WTC11 (cell line): ENCODE measurements at regions of chr17 and their contacts with region 1.

Region 1: GRCh38 chr17:78082988-78083387 is 45.6 kb downstream of the TMC6 start:
- DNase-seq: no peak
- ATAC-seq: no peak
- H3K4me3 Mint-ChIP-seq: no peak overlapping the region
- H3K27ac Mint-ChIP-seq: no peak overlapping the region
- H3K4me1 Mint-ChIP-seq: no peaks in the 10 kb centered on the region
- H3K27me3 Mint-ChIP-seq: no peaks in the 10 kb centered on the region
- CTCF ChIP-seq: no peak

Region 2: GRCh38 chr17:78007655-78008054 is 75.3 kb before region 1 on chr17:
- CTCF ChIA-PET with region 1: no interaction called
- POLR2A ChIA-PET with region 1: no interaction called
- DNase-seq: no peak
- ATAC-seq: no peak
- H3K4me3 Mint-ChIP-seq: no peak overlapping the region
- H3K27ac Mint-ChIP-seq: no peak overlapping the region
- H3K4me1 Mint-ChIP-seq: peaks cover 20% of the 10 kb centered on the region
- H3K27me3 Mint-ChIP-seq: no peaks in the 10 kb centered on the region
- CTCF ChIP-seq: no peak

Region 3: DNA sequence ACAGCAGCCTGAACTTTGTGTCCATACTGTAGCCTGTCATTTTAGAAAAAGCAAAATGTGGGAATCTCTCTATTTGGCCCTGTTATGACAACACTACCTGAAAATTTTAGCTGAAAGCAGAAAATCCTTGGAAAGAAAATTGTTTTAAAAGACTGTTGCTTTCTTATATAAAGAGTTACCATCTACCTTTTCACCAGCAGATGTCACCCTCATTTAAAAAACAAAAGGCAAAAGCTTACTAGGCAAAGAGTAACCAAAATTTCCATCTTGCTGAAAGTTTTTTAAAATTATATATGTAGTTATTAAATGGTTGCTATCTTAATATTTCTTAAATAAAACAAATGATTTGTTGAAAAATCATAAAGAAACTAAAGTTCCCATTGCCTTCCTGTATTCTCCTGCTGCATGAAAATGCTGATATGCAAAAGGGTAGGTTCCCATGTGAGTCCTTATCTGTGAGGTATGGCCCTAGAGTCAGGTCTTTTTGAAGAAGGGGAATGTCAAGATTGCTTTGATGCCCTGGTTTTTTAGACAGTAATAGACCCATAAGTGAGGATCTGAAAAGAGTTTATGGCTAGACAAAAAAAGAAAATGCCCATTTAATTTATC is 63.5 kb before region 1 on chr17:
- CTCF ChIA-PET with region 1: interaction called, 19 read pairs
- POLR2A ChIA-PET with region 1: no interaction called
- DNase-seq: no peak
- ATAC-seq: no peak
- H3K4me3 Mint-ChIP-seq: no peak overlapping the region
- H3K27ac Mint-ChIP-seq: peak overlapping the region; percentile 15
- H3K4me1 Mint-ChIP-seq: peaks cover 16% of the 10 kb centered on the region
- H3K27me3 Mint-ChIP-seq: no peaks in the 10 kb centered on the region
- CTCF ChIP-seq: no peak

Region 4: DNA sequence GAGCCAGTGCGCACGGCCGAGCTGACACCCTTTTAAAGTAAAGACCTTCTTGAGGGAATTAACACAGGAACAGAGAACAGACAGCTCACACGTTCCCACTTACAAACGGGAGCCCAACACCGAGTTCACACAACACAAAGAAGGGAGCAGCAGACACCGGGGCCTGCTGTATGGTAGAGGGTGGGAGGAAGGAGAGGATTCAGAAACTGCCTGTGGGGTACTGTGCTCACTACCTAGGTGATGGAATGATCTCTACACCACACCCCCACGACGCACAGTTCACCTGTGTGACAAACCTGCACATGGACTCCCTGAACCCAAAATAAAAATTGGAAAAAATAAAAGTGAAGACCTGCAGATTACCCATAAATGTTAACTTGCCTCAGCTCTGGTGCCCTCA is 13.1 kb after region 1 on chr17:
- CTCF ChIA-PET with region 1: interaction called, 10 read pairs
- POLR2A ChIA-PET with region 1: no interaction called
- DNase-seq: no peak
- ATAC-seq: no peak
- H3K4me3 Mint-ChIP-seq: no peak overlapping the region
- H3K27ac Mint-ChIP-seq: no peak overlapping the region
- H3K4me1 Mint-ChIP-seq: no peaks in the 10 kb centered on the region
- H3K27me3 Mint-ChIP-seq: no peaks in the 10 kb centered on the region; the same call in 1 of the 2 replicates
- CTCF ChIP-seq: no peak

Region 5: DNA sequence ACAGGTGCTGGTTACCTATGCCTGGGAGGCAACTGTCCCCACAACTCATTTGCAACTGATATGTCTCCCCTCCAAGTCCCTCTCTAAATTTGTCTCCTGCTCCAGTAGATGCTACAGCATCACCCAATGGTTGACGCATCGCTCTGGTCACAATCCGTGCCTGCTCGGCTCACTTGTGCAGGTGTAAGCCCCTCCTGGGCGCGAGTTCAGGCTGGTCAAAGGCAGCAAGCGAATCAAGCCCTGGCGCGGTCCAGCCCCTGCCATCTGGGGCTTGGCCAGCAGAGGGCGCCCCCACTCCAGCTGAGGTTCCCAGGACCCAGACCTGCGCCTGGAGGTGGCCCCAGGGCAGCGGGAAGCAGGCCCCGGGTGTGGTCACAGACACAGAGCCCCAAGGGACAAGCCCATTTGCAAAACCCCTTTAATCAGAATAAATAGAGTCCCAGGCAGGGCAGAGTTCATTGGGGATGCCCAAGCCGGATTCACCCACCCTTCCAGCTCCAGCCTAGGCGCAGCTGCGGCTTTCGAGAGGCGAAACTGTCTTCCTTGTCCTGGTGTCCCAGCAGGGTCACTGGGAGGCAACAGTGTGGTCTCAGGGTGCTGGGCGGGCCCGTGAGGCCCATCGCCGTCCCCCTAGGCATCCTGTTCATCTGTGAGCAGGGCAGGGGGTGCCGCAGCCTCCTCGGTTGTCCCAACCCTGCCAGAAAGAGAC is 29.7 kb after region 1 on chr17:
- CTCF ChIA-PET with region 1: interaction called, 19 read pairs
- POLR2A ChIA-PET with region 1: no interaction called
- DNase-seq: peak; percentile 94
- ATAC-seq: peak; percentile 87
- H3K4me3 Mint-ChIP-seq: no peak overlapping the region
- H3K27ac Mint-ChIP-seq: peak overlapping the region; percentile 99
- H3K4me1 Mint-ChIP-seq: peaks cover 2% of the 10 kb centered on the region; the same call in 1 of the 2 replicates
- H3K27me3 Mint-ChIP-seq: no peaks in the 10 kb centered on the region
- CTCF ChIP-seq: peak; percentile 99

Region 6: DNA sequence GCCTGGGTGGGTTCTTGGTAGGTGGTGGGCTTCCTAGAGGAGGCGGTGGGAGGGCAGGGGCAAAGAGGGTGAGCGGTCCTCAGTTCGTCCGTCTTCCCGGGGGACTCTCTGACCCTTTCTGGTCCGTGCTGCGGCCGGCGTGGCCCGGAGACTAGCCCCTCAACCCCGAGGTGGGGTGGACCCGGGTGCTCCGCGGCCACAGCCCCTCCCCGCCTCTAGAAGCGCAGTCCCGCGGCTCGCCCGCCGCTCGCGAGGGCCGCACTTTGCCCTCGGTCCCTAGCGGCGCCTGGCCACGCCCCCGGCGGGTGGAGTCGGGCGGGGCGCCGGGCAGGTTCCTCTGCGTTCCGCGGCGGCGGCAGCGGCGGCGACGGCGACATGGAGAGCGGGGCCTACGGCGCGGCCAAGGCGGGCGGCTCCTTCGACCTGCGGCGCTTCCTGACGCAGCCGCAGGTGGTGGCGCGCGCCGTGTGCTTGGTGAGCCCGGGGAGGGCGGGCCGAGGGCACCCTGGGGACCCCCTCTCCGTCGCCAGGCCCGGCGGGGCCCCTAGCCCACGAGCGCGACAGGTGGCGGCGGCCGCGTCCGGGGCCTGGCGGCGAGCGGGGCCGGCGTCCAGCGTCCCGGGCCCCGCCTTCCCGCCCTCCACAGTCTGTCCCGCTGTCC is 85.4 kb after region 1 on chr17 and contains the start of gene SYNGR2:
- CTCF ChIA-PET with region 1: interaction called, 30 read pairs
- POLR2A ChIA-PET with region 1: no interaction called
- DNase-seq: peak; percentile 91
- ATAC-seq: peak; percentile 62
- H3K4me3 Mint-ChIP-seq: peak within 1 kb of the TSS; percentile 70
- H3K27ac Mint-ChIP-seq: no peak within 1 kb of the TSS
- H3K4me1 Mint-ChIP-seq: peaks cover 36% of the 10 kb centered on the region
- H3K27me3 Mint-ChIP-seq: no peaks in the 10 kb centered on the region
- CTCF ChIP-seq: no peak
- total RNA-seq, gene SYNGR2: 47.7 to 50.3 TPM (median 50.2 TPM) in 3 replicates